ENCODE measurements at regions of chr11 and their contacts with region 1.

Region 1: GRCh38 chr11:17595526-17596309 is 48.7 kb downstream of the OTOG start:
- DNase-seq: peak in 1 of 2 donors; percentile 22
- H3K4me3 ChIP-seq: no peak overlapping the region
- H3K27ac ChIP-seq: no peak overlapping the region
- H3K4me1 ChIP-seq: no peaks in the 10 kb centered on the region
- H3K27me3 ChIP-seq: no peaks in the 10 kb centered on the region
- CTCF ChIP-seq: no peak
- POLR2A ChIP-seq: no peak

Region 2: DNA sequence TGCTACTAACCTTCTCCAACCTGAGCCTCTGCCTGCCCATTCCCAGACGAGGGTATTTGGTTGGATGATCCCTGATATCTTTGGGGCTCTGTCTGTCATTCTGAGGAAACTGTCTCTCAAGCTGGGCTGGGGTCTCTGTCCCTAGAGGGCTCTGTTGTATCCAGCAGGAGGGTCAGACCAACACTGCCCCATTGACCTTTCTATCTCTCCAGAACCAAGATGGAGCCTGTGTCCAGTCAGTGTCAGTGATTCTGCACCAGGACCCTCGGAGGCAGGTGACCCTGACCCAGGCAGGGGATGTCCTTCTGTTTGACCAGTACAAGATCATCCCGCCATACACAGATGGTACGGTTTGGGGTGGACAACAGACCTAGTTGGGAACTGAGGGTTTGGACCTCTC is 26.8 kb before region 1 on chr11:
- intact Hi-C with region 1: loop called (anchors 1 kb)
- DNase-seq: peak in 1 of 2 donors; percentile 25
- H3K4me3 ChIP-seq: no peak overlapping the region
- H3K27ac ChIP-seq: no peak overlapping the region
- H3K4me1 ChIP-seq: no peaks in the 10 kb centered on the region
- H3K27me3 ChIP-seq: no peaks in the 10 kb centered on the region
- CTCF ChIP-seq: no peak
- POLR2A ChIP-seq: no peak

Region 3: DNA sequence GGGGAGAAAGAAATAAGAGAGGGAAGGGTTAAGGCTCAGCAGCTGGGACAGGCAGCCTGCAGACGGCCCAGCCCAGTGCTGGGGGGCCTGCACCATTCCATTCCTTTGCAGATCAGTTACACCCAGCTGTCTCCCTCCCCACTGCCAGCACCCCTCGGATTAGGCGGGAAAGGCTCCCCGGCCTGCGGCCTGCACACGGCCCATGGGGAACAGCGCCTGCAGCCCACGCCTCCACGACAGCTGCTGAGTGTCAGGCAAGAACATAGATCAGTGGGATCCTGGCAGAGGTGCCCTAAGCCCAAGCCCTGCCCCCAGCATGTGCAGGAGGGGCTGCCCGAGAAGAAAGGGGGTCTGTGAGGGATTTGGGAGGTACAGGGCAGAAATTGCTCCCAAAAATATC is 57.9 kb after region 1 on chr11:
- intact Hi-C with region 1: no loop called
- DNase-seq: no peak
- H3K4me3 ChIP-seq: no peak overlapping the region
- H3K27ac ChIP-seq: no peak overlapping the region
- H3K4me1 ChIP-seq: no peaks in the 10 kb centered on the region
- H3K27me3 ChIP-seq: peaks cover 0 to 3% of the 10 kb centered on the region in 2 donors
- CTCF ChIP-seq: no peak
- POLR2A ChIP-seq: no peak

Region 4: DNA sequence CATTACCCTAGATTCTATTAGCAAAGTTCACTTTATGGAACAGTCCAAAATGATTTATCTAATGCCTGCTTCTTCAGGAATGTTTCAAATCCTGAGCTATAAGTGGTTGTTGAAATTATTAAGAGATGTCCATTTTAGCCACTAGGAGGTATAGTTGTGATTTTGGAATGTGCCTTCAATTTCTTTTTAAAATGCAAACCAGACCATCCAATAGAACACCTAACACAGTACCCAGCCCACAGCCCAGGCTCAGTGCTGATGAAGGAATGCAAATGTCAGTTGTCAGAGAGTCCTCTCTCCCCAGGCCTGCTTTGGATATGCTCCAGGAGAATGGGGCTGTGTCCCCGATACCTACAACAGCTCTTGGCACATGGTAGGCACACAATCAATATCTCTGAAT is 1730.8 kb after region 1 on chr11:
- intact Hi-C with region 1: no loop called
- DNase-seq: no peak
- H3K4me3 ChIP-seq: no peak overlapping the region
- H3K27ac ChIP-seq: no peak overlapping the region
- H3K4me1 ChIP-seq: no peaks in the 10 kb centered on the region
- H3K27me3 ChIP-seq: peaks cover 0 to 4% of the 10 kb centered on the region in 2 donors
- CTCF ChIP-seq: no peak
- POLR2A ChIP-seq: no peak

Measured in breast epithelium (tissue), 4 donors.